T-cell (primary cell): ENCODE measurements at regions of chr11 and their contacts with region 1.

Region 1: GRCh38 chr11:118051611-118052461 is 25.0 kb upstream of the TMPRSS4 start:
- DNase-seq: peak; percentile 57 to 90 (median 78)
- ATAC-seq: peak; percentile 96 to 97 (median 97)
- H3K4me3 ChIP-seq: no peak overlapping the region
- H3K4me3 Mint-ChIP-seq: peak overlapping the region; percentile 9 to 63 (median 59)
- H3K27ac ChIP-seq: peak overlapping the region; percentile 76
- H3K27ac Mint-ChIP-seq: peak overlapping the region; percentile 97 to 99
- H3K4me1 ChIP-seq: peaks cover 36 to 67% of the 10 kb centered on the region in 2 experiments
- H3K4me1 Mint-ChIP-seq: peaks cover 60 to 62% (median 61%) of the 10 kb centered on the region in 3 donors
- H3K27me3 ChIP-seq: no peaks in the 10 kb centered on the region
- H3K27me3 Mint-ChIP-seq: peaks cover 0 to 1% of the 10 kb centered on the region in 2 donors

Region 2: DNA sequence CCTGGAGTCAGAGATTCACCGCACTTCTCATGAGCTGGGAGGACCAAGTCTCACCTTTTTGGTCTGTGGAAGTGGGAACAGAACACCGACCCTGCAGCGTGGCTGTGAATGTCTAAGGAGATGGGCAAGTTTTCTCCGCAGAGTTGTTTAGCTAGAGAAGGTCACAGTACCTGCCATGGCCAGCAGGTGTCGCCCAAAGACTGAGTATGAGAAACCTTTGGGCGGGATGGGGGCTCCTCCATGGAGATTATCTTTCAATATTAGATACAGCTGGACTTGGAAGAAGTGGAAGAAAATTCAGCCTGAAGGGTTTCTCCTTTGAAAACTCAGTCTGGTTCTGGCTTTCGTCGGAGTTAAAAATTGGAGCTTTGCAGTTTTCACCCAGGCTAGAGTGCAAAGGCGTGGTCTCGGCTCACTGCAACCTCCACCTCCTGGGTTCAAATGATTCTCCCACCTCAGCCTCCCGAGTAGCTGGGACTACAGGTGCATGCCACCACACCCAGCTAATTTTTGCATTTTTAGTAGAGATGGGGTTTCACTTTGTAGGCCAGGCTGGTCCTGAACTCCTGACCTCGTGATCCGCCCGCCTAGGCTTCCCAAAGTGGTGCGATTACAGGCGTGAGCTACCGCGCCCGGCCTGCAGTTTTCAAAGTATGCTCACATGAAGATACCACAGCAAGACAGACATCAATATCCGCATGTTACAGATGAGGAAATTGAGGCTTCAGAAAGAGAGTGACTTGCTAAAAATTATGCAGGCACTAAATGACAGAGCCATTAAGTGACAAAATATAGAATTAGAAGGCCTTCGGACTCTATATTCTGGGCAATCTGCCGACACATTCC is 244.1 kb before region 1 on chr11:
- CTCF ChIA-PET with region 1: interaction called, 9 to 24 read pairs
- POLR2A ChIA-PET with region 1: no interaction called
- DNase-seq: peak in 33 of 35 experiments; percentile 33 to 87 (median 68)
- ATAC-seq: peak; percentile 53 to 81 (median 70)
- H3K4me3 ChIP-seq: no peak overlapping the region
- H3K4me3 Mint-ChIP-seq: no peak overlapping the region
- H3K27ac ChIP-seq: no peak overlapping the region
- H3K27ac Mint-ChIP-seq: no peak overlapping the region
- H3K4me1 ChIP-seq: peaks cover 0 to 15% of the 10 kb centered on the region in 2 experiments
- H3K4me1 Mint-ChIP-seq: peaks cover 3 to 12% (median 8%) of the 10 kb centered on the region in 3 donors
- H3K27me3 ChIP-seq: peaks cover 0 to 11% of the 10 kb centered on the region in 2 experiments
- H3K27me3 Mint-ChIP-seq: no peaks in the 10 kb centered on the region

Region 3: GRCh38 chr11:117843666-117844484 is 208.0 kb before region 1 on chr11:
- CTCF ChIA-PET with region 1: interaction called, 7 to 46 read pairs
- POLR2A ChIA-PET with region 1: interaction called in 1 of 2 experiments, 3 read pairs
- DNase-seq: peak; percentile 37 to 90 (median 75)
- ATAC-seq: peak; percentile 78 to 83 (median 82)
- H3K4me3 ChIP-seq: no peak overlapping the region
- H3K4me3 Mint-ChIP-seq: no peak overlapping the region
- H3K27ac ChIP-seq: no peak overlapping the region
- H3K27ac Mint-ChIP-seq: no peak overlapping the region
- H3K4me1 ChIP-seq: peaks cover 0 to 8% of the 10 kb centered on the region in 2 experiments
- H3K4me1 Mint-ChIP-seq: peaks cover 0 to 6% (median 0%) of the 10 kb centered on the region in 3 donors
- H3K27me3 ChIP-seq: peaks cover 0 to 6% of the 10 kb centered on the region in 2 experiments
- H3K27me3 Mint-ChIP-seq: peaks cover 0 to 2% of the 10 kb centered on the region in 2 donors

Region 4: DNA sequence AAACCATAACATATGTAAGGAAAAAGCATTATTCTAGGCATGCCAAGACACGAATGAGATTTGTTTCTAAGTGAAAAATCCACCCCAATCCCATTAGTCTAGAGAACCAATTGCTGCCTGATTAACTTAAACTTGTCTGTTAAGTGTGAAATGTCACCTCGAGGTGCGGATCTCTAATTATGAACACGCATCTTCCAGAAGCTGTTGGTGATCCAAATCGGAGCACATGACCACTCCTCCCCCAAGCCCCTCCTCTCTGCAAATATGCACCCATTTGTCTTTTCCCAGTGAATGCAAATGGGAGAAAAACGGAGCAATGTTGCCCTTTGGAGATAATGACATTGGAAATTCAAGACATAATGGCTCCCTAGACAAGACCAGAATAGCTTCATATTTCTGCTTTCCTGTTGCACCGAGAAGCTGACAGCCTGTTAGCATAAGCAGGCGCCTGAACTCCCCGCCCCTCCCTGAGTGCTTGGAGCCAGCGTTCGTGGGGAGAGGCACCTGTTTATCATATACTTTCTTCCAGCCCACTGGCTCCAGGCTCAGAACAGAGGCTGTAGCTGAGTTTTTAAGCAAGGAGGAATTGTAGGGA is 169.4 kb before region 1 on chr11:
- CTCF ChIA-PET with region 1: no interaction called
- POLR2A ChIA-PET with region 1: no interaction called
- DNase-seq: no peak
- ATAC-seq: no peak
- H3K4me3 ChIP-seq: no peak overlapping the region
- H3K4me3 Mint-ChIP-seq: no peak overlapping the region
- H3K27ac ChIP-seq: no peak overlapping the region
- H3K27ac Mint-ChIP-seq: no peak overlapping the region
- H3K4me1 ChIP-seq: no peaks in the 10 kb centered on the region
- H3K4me1 Mint-ChIP-seq: no peaks in the 10 kb centered on the region
- H3K27me3 ChIP-seq: peaks cover 0 to 34% of the 10 kb centered on the region in 2 experiments
- H3K27me3 Mint-ChIP-seq: peaks cover 29 to 37% of the 10 kb centered on the region in 2 donors

Region 5: DNA sequence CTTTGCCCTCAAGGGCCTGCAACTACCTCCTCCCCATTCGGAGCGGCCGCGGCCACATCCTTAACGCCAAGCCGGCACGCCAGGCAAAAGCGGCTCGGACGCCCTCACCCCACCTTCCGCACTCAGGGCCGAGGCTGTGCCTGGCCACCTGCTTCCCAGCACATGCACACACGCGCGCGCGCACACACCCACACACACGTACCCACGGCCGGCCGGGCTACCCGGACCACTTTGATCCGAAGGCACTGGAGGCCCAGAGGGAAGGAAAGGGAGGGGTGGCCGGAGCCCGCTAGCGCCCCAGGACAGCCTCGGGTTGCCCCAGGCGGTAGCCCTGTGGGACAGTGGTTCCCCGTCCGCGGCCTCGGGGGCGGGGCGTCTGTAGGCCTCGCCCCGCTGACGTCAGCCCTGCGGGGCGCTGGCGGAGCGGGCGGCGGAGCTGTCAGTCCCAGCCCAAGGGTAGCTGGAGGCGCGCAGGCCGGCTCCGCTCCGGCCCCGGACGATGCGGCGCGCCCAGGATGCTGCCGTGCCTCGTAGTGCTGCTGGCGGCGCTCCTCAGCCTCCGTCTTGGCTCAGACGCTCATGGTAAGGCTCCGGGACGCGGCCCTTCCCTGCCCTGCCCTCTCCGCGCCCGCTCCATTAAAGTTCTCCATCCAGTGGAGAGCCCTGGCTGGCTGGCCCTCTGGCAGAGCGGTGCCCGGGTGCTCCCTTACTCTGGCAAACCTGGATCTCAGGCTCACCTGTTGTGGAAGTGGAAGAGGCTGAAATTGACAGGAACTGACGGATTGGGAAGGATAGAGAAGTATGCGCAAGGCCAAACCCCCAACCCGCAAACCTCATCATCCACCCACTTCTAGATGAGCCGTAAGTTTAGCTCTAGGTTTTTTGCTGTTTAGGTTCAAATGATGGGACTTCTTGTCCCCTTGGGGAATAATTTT is 65.6 kb before region 1 on chr11 and contains the start of gene IL10RA:
- CTCF ChIA-PET with region 1: interaction called, 3 to 39 read pairs
- POLR2A ChIA-PET with region 1: interaction called, 4 to 5 read pairs
- DNase-seq: peak; percentile 51 to 90 (median 73)
- ATAC-seq: peak; percentile 83 to 88 (median 86)
- H3K4me3 ChIP-seq: peak within 1 kb of the TSS; percentile 89 to 96
- H3K4me3 Mint-ChIP-seq: peak within 1 kb of the TSS; percentile 91 to 95 (median 93)
- H3K27ac ChIP-seq: peak within 1 kb of the TSS; percentile 89
- H3K27ac Mint-ChIP-seq: peak within 1 kb of the TSS; percentile 94 to 96
- H3K4me1 ChIP-seq: peaks cover 23 to 66% of the 10 kb centered on the region in 2 experiments
- H3K4me1 Mint-ChIP-seq: peaks cover 75 to 83% (median 76%) of the 10 kb centered on the region in 3 donors
- H3K27me3 ChIP-seq: no peaks in the 10 kb centered on the region
- H3K27me3 Mint-ChIP-seq: no peaks in the 10 kb centered on the region
- total RNA-seq, gene IL10RA: 195 to 450 (median 375) TPM

Region 6: GRCh38 chr11:119624102-119624615 is 1572.3 kb after region 1 on chr11:
- CTCF ChIA-PET with region 1: no interaction called
- POLR2A ChIA-PET with region 1: no interaction called
- DNase-seq: peak in 1 of 35 experiments; percentile 13
- ATAC-seq: no peak
- H3K4me3 ChIP-seq: no peak overlapping the region
- H3K4me3 Mint-ChIP-seq: no peak overlapping the region
- H3K27ac ChIP-seq: no peak overlapping the region
- H3K27ac Mint-ChIP-seq: no peak overlapping the region
- H3K4me1 ChIP-seq: no peaks in the 10 kb centered on the region
- H3K4me1 Mint-ChIP-seq: no peaks in the 10 kb centered on the region
- H3K27me3 ChIP-seq: peaks cover 0 to 68% of the 10 kb centered on the region in 2 experiments
- H3K27me3 Mint-ChIP-seq: peaks cover 19 to 26% of the 10 kb centered on the region in 2 donors